ENCODE measurements at regions of chr2 and their contacts with region 1.

Region 1: GRCh38 chr2:208175069-208175839 is 11.9 kb upstream of the CRYGA start:
- DNase-seq: no peak
- ATAC-seq: peak; percentile 96

Region 2: DNA sequence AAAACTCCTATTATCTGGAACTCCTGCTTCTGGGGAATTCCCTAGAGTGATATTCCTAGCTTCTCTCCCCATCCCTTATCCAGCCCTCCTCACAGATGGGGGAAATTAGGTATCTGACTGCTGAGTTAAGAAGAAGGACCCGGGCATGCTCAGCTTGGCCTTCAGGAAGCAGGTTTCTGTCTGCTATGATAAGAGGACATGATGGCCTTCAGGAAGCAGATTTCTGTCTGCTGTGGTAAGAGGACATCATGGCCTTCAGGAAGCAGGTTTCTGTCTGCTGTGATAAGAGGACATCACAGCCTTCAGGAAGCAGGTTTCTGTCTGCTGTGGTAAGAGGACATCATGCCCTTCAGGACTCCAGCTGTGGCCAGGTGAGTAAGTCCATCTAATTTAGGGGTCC is 215.2 kb before region 1 on chr2:
- intact Hi-C with region 1: no loop called
- DNase-seq: no peak
- ATAC-seq: no peak

Region 3: GRCh38 chr2:208254871-208255556 is 79.8 kb after region 1 on chr2 and contains the start of gene IDH1:
- intact Hi-C with region 1: loop called (anchors 5 kb)
- DNase-seq: peak; percentile 98
- ATAC-seq: peak; percentile 97
- total RNA-seq, gene IDH1: 52.4 TPM

Measured in Right ventricle myocardium inferior (tissue), 1 donor.